WTC11 (cell line): ENCODE measurements at regions of chr4 and their contacts with region 1.

Region 1: DNA sequence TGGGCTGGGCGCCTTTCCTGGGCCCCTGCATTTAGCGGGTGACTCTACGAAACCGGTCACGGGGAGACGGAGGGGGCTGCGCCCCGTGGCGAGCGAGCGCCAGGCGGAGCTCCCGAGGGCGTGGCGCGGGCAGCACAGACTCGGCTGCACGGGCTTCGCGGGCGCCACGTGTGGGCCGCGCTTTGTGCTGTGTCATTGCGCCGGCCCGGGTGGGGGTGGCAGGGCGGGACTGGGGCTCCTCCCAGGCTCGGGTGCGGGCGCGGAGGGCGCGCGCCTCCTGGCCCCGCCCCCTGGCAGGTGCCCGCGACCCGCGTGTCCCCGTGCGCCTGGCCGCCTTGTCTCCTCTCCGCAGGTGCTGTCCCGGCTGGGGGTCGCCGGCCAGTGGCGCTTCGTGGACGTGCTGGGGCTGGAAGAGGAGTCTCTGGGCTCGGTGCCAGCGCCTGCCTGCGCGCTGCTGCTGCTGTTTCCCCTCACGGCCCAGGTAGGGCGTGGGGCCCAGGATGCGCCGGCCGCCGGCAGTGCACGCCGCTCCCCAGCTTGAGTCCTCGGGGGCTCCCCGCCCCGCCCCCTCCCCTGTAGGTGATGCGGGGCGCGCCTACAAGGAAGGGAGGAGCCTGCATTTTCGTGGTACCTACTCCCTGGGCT is 651 bp downstream of the UCHL1 start:
- DNase-seq: peak; percentile 55
- ATAC-seq: peak; percentile 35
- H3K4me3 Mint-ChIP-seq: peak overlapping the region; percentile 94
- H3K27ac Mint-ChIP-seq: no peak overlapping the region
- H3K4me1 Mint-ChIP-seq: peaks cover 32% of the 10 kb centered on the region
- H3K27me3 Mint-ChIP-seq: no peaks in the 10 kb centered on the region; the same call in 1 of the 2 replicates
- CTCF ChIP-seq: no peak

Region 2: GRCh38 chr4:41214136-41214824 is 43.1 kb before region 1 on chr4 and contains the start of gene APBB2:
- CTCF ChIA-PET with region 1: interaction called, 9 read pairs
- POLR2A ChIA-PET with region 1: interaction called, 15 read pairs
- DNase-seq: peak; percentile 96
- ATAC-seq: peak; percentile 80
- H3K4me3 Mint-ChIP-seq: peak within 1 kb of the TSS; percentile 83
- H3K27ac Mint-ChIP-seq: no peak within 1 kb of the TSS
- H3K4me1 Mint-ChIP-seq: peaks cover 46% of the 10 kb centered on the region
- H3K27me3 Mint-ChIP-seq: peaks cover 13% of the 10 kb centered on the region
- CTCF ChIP-seq: peak; percentile 80
- total RNA-seq, gene APBB2: 43.2 to 49.0 TPM (median 48.5 TPM) in 3 replicates

Region 3: DNA sequence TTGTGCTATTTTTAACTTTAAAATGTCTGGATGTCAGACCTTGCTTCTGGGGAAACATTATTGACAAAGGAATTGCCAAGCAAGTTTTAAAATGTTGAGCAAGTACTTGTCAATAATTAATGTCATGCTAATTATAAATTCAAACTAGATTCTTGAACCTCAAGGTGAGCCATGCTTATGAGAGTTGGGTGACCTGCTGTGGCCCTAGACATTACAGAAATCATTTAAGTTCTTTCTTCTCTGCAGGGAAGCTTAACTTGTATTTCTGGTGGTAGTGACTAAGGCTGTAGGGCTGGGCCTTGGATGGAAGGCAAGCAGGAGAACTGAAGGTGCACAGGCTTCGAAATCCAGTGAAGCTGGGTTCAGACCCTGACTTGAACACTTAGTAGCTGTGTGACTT is 15.5 kb before region 1 on chr4:
- CTCF ChIA-PET with region 1: interaction called, 4 read pairs
- POLR2A ChIA-PET with region 1: interaction called, 10 read pairs
- DNase-seq: no peak
- ATAC-seq: no peak
- H3K4me3 Mint-ChIP-seq: no peak overlapping the region
- H3K27ac Mint-ChIP-seq: no peak overlapping the region
- H3K4me1 Mint-ChIP-seq: peaks cover 6% of the 10 kb centered on the region
- H3K27me3 Mint-ChIP-seq: no peaks in the 10 kb centered on the region
- CTCF ChIP-seq: no peak